Activated CD4-positive, alpha-beta T cell treated with anti-CD3 and anti-CD28 coated beads, Interleukin-2, amount 10 ng/mL, durations not matched to agents 7 days and 5 days (primary cell): ENCODE measurements at regions of chr4 and their contacts with region 1.

Region 1: GRCh38 chr4:57013543-57014120 is 34.9 kb downstream of the POLR2B start:
- DNase-seq: no peak
- H3K4me3 Mint-ChIP-seq: no peak overlapping the region
- H3K27ac Mint-ChIP-seq: no peak overlapping the region
- H3K4me1 Mint-ChIP-seq: peaks cover 3% of the 10 kb centered on the region
- H3K27me3 Mint-ChIP-seq: no peaks in the 10 kb centered on the region

Region 2: GRCh38 chr4:56995525-56995924 is 18.1 kb before region 1 on chr4:
- CTCF ChIA-PET with region 1: interaction called, 11 read pairs
- POLR2A ChIA-PET with region 1: no interaction called
- DNase-seq: no peak
- H3K4me3 Mint-ChIP-seq: no peak overlapping the region
- H3K27ac Mint-ChIP-seq: no peak overlapping the region
- H3K4me1 Mint-ChIP-seq: peaks cover 7% of the 10 kb centered on the region
- H3K27me3 Mint-ChIP-seq: no peaks in the 10 kb centered on the region

Region 3: DNA sequence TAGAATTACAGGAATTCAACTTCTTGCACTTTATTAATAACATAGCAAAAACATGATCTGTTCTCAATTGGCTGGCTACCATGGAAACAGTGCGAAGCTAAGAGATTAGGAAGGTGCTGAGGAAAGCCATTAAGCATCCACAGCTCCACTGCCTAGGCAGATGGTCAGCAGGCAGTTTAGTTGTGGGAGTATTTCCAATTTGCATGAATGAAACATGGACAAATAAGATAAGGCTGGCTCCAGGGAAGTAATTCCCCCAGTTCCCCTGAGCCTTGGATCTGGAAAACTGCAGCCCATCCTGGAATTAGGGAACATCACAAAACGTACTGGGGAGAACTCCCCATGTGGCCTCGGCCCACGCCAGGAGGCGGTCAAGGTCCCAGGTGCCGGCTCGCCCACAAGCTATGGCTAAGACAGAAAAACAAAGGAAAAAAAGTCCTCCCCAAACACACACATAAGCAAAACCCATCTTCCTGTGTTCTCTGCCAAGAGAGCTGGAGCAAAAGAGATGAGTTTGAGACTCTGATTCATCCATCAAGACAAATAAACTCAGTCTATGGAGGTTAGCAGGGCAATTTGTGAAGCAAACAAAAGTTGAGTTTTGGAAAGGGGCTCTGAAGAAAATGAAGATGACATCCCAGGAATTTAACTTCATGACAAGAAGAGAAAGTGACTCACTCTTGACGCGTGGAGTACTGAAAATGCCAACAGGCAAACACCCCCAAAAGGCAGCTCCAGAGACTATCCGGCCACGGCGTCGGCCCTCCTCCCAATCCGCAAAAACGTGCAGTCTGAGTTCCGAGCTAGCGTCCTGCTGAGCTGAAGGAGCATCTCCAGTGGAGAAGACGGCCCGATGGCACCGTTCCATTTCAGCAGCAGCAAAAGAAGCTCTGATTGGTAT is 51.4 kb after region 1 on chr4:
- CTCF ChIA-PET with region 1: no interaction called
- POLR2A ChIA-PET with region 1: no interaction called
- DNase-seq: no peak
- H3K4me3 Mint-ChIP-seq: no peak overlapping the region
- H3K27ac Mint-ChIP-seq: no peak overlapping the region
- H3K4me1 Mint-ChIP-seq: no peaks in the 10 kb centered on the region
- H3K27me3 Mint-ChIP-seq: peaks cover 5% of the 10 kb centered on the region

Region 4: GRCh38 chr4:57214654-57215411 is 201.2 kb after region 1 on chr4:
- CTCF ChIA-PET with region 1: no interaction called
- POLR2A ChIA-PET with region 1: no interaction called
- DNase-seq: no peak
- H3K4me3 Mint-ChIP-seq: no peak overlapping the region
- H3K27ac Mint-ChIP-seq: no peak overlapping the region
- H3K4me1 Mint-ChIP-seq: no peaks in the 10 kb centered on the region
- H3K27me3 Mint-ChIP-seq: no peaks in the 10 kb centered on the region